Activated CD8-positive, alpha-beta T cell treated with anti-CD3 and anti-CD28 coated beads, Interleukin-2, amount 10 ng/mL, durations not matched to agents 7 days and 5 days (primary cell): ENCODE measurements at regions of chr2 and their contacts with region 1.

Region 1: DNA sequence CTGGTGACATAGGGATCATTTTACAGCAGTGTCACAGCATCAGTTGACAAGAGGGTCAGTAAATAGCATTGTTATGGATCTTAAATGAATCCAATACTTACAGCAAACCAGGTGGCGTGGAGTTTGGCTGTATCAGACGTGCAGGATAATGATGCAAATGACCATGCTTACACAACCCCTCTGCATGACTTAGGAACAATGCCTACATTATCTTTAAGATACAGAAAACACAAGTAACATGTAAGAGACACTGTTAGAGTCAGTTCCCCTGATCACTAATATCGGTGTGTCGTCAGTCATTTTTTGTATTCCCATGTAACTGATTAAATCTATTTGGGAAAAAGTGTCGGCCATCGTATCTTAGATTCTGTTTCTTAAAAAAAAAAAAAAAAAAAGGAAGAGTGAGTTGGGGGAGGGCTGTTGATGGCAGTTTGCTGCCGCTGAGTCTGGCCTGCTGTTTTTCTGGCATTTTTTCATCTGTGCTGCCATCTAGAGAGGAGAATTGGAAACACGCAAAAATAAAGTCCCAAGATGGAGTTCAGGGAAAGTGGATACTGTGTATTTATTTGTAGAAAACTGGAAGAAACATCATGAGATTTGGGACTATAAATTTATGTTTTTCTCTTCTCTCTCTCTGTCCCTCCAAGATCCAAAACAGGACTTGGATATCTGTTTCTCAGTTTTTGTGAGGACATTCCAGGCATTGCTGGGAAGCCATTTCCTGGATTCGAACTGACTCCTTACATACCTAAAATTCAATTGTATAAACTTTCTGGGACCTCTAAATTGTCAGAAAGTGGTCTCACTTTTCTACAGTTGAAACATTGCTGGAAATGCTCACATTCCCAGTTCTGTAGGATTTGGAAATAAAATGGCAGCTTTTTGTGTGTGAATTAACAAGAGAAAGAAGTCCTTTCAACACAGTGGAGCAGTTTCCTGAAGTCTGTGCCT is 60.3 kb upstream of the AGPS start:
- DNase-seq: peak; percentile 69
- ATAC-seq: peak; percentile 82
- H3K4me3 Mint-ChIP-seq: no peak overlapping the region
- H3K27ac Mint-ChIP-seq: no peak overlapping the region
- H3K4me1 Mint-ChIP-seq: peaks cover 15% of the 10 kb centered on the region
- H3K27me3 Mint-ChIP-seq: no peaks in the 10 kb centered on the region

Region 2: GRCh38 chr2:177138823-177139222 is 193.5 kb before region 1 on chr2:
- CTCF ChIA-PET with region 1: no interaction called
- POLR2A ChIA-PET with region 1: no interaction called
- DNase-seq: no peak
- ATAC-seq: no peak
- H3K4me3 Mint-ChIP-seq: no peak overlapping the region
- H3K27ac Mint-ChIP-seq: no peak overlapping the region
- H3K4me1 Mint-ChIP-seq: peaks cover 2% of the 10 kb centered on the region
- H3K27me3 Mint-ChIP-seq: peaks cover 10% of the 10 kb centered on the region

Region 3: GRCh38 chr2:177306550-177306949 is 25.8 kb before region 1 on chr2:
- CTCF ChIA-PET with region 1: interaction called, 10 read pairs
- POLR2A ChIA-PET with region 1: no interaction called
- DNase-seq: no peak
- ATAC-seq: no peak
- H3K4me3 Mint-ChIP-seq: no peak overlapping the region
- H3K27ac Mint-ChIP-seq: no peak overlapping the region
- H3K4me1 Mint-ChIP-seq: peaks cover 33% of the 10 kb centered on the region
- H3K27me3 Mint-ChIP-seq: no peaks in the 10 kb centered on the region

Region 4: GRCh38 chr2:177380181-177380580 is 47.9 kb after region 1 on chr2:
- CTCF ChIA-PET with region 1: interaction called, 13 read pairs
- POLR2A ChIA-PET with region 1: no interaction called
- DNase-seq: no peak
- ATAC-seq: no peak
- H3K4me3 Mint-ChIP-seq: no peak overlapping the region
- H3K27ac Mint-ChIP-seq: no peak overlapping the region
- H3K4me1 Mint-ChIP-seq: no peaks in the 10 kb centered on the region
- H3K27me3 Mint-ChIP-seq: no peaks in the 10 kb centered on the region

Region 5: GRCh38 chr2:177419274-177419673 is 87.0 kb after region 1 on chr2:
- CTCF ChIA-PET with region 1: interaction called, 181 read pairs
- POLR2A ChIA-PET with region 1: no interaction called
- DNase-seq: no peak
- ATAC-seq: no peak
- H3K4me3 Mint-ChIP-seq: no peak overlapping the region
- H3K27ac Mint-ChIP-seq: no peak overlapping the region
- H3K4me1 Mint-ChIP-seq: peaks cover 23% of the 10 kb centered on the region
- H3K27me3 Mint-ChIP-seq: no peaks in the 10 kb centered on the region

Region 6: GRCh38 chr2:177763532-177764265 is 431.4 kb after region 1 on chr2:
- CTCF ChIA-PET with region 1: interaction called, 25 read pairs
- POLR2A ChIA-PET with region 1: no interaction called
- DNase-seq: peak; percentile 88
- ATAC-seq: peak; percentile 99
- H3K4me3 Mint-ChIP-seq: no peak overlapping the region
- H3K27ac Mint-ChIP-seq: no peak overlapping the region
- H3K4me1 Mint-ChIP-seq: peaks cover 3% of the 10 kb centered on the region
- H3K27me3 Mint-ChIP-seq: peaks cover 17% of the 10 kb centered on the region